ENCODE measurements at regions of chr3 and their contacts with region 1.

Region 1: GRCh38 chr3:32733631-32734229 is 48.7 kb downstream of the CNOT10 start:
- DNase-seq: peak in 1 of 2 experiments; percentile 64
- H3K4me3 ChIP-seq: no peak overlapping the region
- H3K4me1 ChIP-seq: no peaks in the 10 kb centered on the region
- H3K27me3 ChIP-seq: no peaks in the 10 kb centered on the region

Region 2: GRCh38 chr3:32557643-32558352 is 175.9 kb before region 1 on chr3:
- in situ Hi-C with region 1: no loop called
- DNase-seq: no peak
- H3K4me3 ChIP-seq: no peak overlapping the region
- H3K4me1 ChIP-seq: peaks cover 6% of the 10 kb centered on the region
- H3K27me3 ChIP-seq: no peaks in the 10 kb centered on the region

Region 3: DNA sequence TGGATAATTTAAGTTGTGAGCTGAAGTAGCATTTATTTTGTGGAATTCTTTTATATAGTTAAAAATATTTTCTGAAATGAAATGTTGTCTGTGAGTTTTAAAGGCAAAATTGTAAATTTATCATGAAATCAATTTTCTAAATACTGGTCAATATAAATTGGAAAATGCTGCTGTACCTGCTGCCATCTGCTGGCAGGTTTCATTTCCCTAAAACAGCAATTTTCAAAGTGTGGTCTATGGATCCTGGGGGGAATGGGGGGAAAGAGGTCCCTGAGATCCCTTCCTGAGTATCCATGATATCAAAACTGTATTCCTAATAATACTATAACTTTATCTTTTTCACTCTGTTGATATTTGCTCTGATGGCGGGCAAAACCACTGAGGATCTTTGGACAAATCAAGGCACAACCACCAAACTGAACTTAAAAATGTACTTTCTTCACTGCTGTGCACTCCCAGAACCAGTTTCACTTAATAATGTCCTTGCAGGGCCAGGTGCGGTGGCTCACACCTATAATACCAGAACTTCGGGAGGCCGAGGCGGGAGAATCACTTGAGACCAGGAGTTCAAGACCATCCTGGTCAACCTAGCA is 200.5 kb after region 1 on chr3:
- in situ Hi-C with region 1: loop called (anchors 5 kb)
- DNase-seq: peak; percentile 19 to 59
- H3K4me3 ChIP-seq: no peak overlapping the region
- H3K4me1 ChIP-seq: peaks cover 9% of the 10 kb centered on the region
- H3K27me3 ChIP-seq: no peaks in the 10 kb centered on the region